Naive thymus-derived CD4-positive, alpha-beta T cell (primary cell): ENCODE measurements at regions of chr12 and their contacts with region 1.

Region 1: DNA sequence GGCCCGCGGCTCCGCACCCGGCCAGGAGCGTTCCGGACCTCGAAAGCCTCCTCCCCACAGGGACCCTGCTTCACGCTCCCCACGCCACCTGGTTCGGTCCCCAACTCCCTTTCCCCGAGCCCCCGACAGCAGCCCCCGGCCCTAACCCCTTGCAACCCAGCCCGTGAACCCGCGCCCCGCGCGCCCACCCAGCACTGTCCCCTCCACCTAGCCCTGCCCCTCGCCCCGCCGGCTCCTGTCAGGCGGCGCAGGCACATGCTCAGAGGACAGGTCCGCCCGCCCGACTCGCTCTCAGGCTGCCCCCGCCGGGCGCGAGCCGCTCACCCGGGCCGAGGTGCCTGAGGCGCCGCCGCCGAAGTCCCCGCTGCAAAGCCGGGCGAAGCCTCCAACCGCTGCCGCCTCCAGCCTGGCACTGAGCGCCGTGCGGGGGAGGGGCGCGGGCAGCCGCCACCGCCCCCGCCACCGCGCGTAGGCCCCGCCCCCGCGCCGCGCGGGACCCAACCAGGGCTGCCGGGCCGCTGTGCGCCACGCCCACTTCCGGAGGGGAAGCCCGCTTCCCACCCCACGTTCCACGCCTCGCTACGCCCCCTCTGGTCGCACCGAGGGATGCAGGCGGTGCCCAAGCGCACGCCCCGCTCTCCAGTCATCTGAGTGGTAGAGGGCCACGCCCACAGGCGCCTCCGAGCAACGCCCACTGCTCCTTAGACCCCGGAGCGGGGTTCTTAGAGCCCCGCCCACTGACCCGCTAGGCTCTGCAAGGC is at the start of gene CORO1C:
- DNase-seq: peak; percentile 90 to 99 (median 94)
- ATAC-seq: peak; percentile 88
- H3K4me3 ChIP-seq: peak within 1 kb of the TSS; percentile 99
- H3K4me3 Mint-ChIP-seq: peak within 1 kb of the TSS; percentile 94 to 99 (median 96)
- H3K27ac ChIP-seq: peak within 1 kb of the TSS; percentile 78
- H3K27ac Mint-ChIP-seq: peak within 1 kb of the TSS; percentile 79 to 98 (median 96)
- H3K4me1 ChIP-seq: peaks cover 4 to 6% of the 10 kb centered on the region in 2 donors
- H3K4me1 Mint-ChIP-seq: peaks cover 0 to 44% (median 19%) of the 10 kb centered on the region in 7 donors
- H3K27me3 ChIP-seq: no peaks in the 10 kb centered on the region
- H3K27me3 Mint-ChIP-seq: peaks cover 0 to 9% (median 0%) of the 10 kb centered on the region in 5 donors
- total RNA-seq, gene CORO1C: 7.6 to 71.8 (median 15.7) TPM

Region 2: DNA sequence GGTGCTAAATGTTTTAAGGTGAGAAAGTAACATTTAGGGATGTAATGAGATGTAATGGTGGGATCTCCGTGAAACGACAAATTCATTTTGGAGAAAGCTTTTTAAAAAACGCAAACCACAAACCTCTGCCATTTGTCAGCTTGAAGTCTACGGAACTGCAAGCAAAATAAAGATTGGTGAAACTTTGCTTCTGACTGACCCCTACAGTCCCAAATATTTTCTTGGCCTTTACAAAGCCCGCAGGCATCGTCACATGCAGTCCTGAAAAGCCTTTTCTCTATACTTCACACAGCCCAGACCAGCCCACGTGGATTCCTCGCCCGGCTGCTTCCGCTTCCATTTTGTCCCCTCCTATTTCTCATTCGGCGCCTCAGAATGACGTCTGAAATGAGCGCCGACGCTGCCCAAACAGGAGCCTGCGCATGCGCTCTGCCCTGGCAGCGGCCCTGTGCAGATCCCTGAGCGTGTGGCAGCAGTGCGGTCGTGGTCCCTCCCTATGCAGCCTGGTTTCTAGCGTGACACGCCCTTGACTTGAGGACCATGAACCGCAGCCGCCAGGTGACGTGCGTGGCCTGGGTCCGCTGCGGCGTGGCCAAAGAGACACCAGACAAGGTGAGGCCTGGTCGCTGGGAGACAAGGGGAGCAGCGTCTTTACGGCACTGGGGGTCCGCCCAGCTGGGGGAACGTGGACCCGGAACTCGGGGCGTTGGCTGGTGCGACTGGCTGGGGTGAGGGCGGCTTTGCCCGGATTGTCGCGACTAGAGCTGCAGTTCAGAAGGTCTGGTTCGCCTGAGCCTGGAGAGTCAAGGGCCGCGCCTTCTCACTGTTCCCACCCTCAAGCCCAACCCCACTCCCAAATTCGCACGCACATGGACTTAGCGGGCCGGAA is 1045.7 kb before region 1 on chr12 and contains the start of gene PWP1:
- CTCF ChIA-PET with region 1: no interaction called
- POLR2A ChIA-PET with region 1: no interaction called
- intact Hi-C with region 1: loop called in 1 of 2 experiments (anchors 1 kb)
- DNase-seq: peak; percentile 93 to 97 (median 95)
- ATAC-seq: peak; percentile 93
- H3K4me3 ChIP-seq: peak within 1 kb of the TSS; percentile 78
- H3K4me3 Mint-ChIP-seq: peak within 1 kb of the TSS; percentile 90 to 99 (median 95)
- H3K27ac ChIP-seq: peak within 1 kb of the TSS; percentile 88
- H3K27ac Mint-ChIP-seq: peak within 1 kb of the TSS; percentile 90 to 99 (median 97)
- H3K4me1 ChIP-seq: peaks cover 12 to 19% of the 10 kb centered on the region in 2 donors
- H3K4me1 Mint-ChIP-seq: peaks cover 23 to 40% (median 35%) of the 10 kb centered on the region in 7 donors
- H3K27me3 ChIP-seq: no peaks in the 10 kb centered on the region
- H3K27me3 Mint-ChIP-seq: peaks cover 0 to 3% (median 0%) of the 10 kb centered on the region in 5 donors
- total RNA-seq, gene PWP1: 20.9 to 42.5 (median 25.7) TPM

Region 3: GRCh38 chr12:108664338-108665258 is 66.7 kb before region 1 on chr12:
- CTCF ChIA-PET with region 1: interaction called, 10 read pairs
- POLR2A ChIA-PET with region 1: no interaction called
- intact Hi-C with region 1: loop called (anchors 1 kb)
- DNase-seq: peak; percentile 35 to 83 (median 78)
- ATAC-seq: peak; percentile 97
- H3K4me3 ChIP-seq: no peak overlapping the region
- H3K4me3 Mint-ChIP-seq: peak overlapping the region in 1 of 10 donors; percentile 24
- H3K27ac ChIP-seq: no peak overlapping the region
- H3K27ac Mint-ChIP-seq: peak overlapping the region in 8 of 9 donors; percentile 8 to 84 (median 75)
- H3K4me1 ChIP-seq: peaks cover 0 to 3% of the 10 kb centered on the region in 2 donors
- H3K4me1 Mint-ChIP-seq: peaks cover 5 to 17% (median 12%) of the 10 kb centered on the region in 7 donors
- H3K27me3 ChIP-seq: no peaks in the 10 kb centered on the region
- H3K27me3 Mint-ChIP-seq: no peaks in the 10 kb centered on the region

Region 4: GRCh38 chr12:108803428-108804105 is 72.3 kb after region 1 on chr12:
- CTCF ChIA-PET with region 1: interaction called, 3 read pairs
- POLR2A ChIA-PET with region 1: interaction called, 3 read pairs
- intact Hi-C with region 1: loop called (anchors 1 to 5 kb)
- DNase-seq: peak; percentile 25 to 78 (median 70)
- ATAC-seq: peak; percentile 93
- H3K4me3 ChIP-seq: no peak overlapping the region
- H3K4me3 Mint-ChIP-seq: no peak overlapping the region
- H3K27ac ChIP-seq: no peak overlapping the region
- H3K27ac Mint-ChIP-seq: peak overlapping the region in 3 of 9 donors; percentile 37 to 62 (median 48)
- H3K4me1 ChIP-seq: peaks cover 0 to 3% of the 10 kb centered on the region in 2 donors
- H3K4me1 Mint-ChIP-seq: peaks cover 0 to 10% (median 3%) of the 10 kb centered on the region in 7 donors
- H3K27me3 ChIP-seq: no peaks in the 10 kb centered on the region
- H3K27me3 Mint-ChIP-seq: no peaks in the 10 kb centered on the region

Region 5: DNA sequence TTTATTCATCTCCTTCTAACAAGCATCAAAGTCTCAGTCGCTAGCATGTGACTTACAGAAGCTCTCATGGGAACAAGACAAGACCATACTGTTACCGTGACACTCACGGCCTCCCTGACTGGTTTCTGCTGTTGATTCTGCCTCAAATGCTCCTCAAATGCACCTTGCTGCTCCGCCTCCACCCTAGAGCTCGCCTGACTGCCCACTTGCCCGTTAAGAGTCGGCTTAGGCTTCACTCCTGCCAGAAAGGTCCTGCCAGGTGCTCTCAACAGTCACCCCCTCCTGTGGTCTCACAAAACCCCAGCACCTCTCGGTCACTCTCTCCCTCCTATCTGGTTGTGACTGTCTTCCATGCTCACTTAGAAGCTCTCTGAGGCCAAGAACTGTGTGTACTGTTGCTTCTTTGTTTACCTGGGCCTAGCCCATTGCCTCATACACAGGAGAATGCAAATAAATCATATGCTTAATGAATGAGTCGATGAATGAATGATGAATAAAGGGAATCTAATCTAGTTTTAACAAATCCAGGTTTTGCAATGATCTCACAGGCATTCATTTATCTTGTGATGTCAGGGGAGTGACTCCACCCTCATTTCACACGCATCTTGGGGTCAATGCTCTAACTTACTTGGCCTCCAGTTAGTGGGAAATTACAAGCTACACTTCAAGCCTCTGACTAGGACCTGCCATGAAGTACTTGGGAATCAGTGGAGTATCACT is 84.8 kb after region 1 on chr12:
- CTCF ChIA-PET with region 1: no interaction called
- POLR2A ChIA-PET with region 1: no interaction called
- intact Hi-C with region 1: no loop called
- DNase-seq: no peak
- ATAC-seq: no peak
- H3K4me3 ChIP-seq: no peak overlapping the region
- H3K4me3 Mint-ChIP-seq: no peak overlapping the region
- H3K27ac ChIP-seq: no peak overlapping the region
- H3K27ac Mint-ChIP-seq: peak overlapping the region in 1 of 9 donors; percentile 44
- H3K4me1 ChIP-seq: no peaks in the 10 kb centered on the region
- H3K4me1 Mint-ChIP-seq: peaks cover 0 to 8% (median 0%) of the 10 kb centered on the region in 7 donors
- H3K27me3 ChIP-seq: no peaks in the 10 kb centered on the region
- H3K27me3 Mint-ChIP-seq: no peaks in the 10 kb centered on the region

Region 6: GRCh38 chr12:109004017-109004416 is 272.7 kb after region 1 on chr12:
- CTCF ChIA-PET with region 1: no interaction called
- POLR2A ChIA-PET with region 1: no interaction called
- intact Hi-C with region 1: no loop called
- DNase-seq: no peak
- ATAC-seq: no peak
- H3K4me3 ChIP-seq: no peak overlapping the region
- H3K4me3 Mint-ChIP-seq: no peak overlapping the region
- H3K27ac ChIP-seq: no peak overlapping the region
- H3K27ac Mint-ChIP-seq: no peak overlapping the region
- H3K4me1 ChIP-seq: no peaks in the 10 kb centered on the region
- H3K4me1 Mint-ChIP-seq: no peaks in the 10 kb centered on the region
- H3K27me3 ChIP-seq: no peaks in the 10 kb centered on the region
- H3K27me3 Mint-ChIP-seq: peaks cover 7 to 21% (median 14%) of the 10 kb centered on the region in 5 donors

Region 7: DNA sequence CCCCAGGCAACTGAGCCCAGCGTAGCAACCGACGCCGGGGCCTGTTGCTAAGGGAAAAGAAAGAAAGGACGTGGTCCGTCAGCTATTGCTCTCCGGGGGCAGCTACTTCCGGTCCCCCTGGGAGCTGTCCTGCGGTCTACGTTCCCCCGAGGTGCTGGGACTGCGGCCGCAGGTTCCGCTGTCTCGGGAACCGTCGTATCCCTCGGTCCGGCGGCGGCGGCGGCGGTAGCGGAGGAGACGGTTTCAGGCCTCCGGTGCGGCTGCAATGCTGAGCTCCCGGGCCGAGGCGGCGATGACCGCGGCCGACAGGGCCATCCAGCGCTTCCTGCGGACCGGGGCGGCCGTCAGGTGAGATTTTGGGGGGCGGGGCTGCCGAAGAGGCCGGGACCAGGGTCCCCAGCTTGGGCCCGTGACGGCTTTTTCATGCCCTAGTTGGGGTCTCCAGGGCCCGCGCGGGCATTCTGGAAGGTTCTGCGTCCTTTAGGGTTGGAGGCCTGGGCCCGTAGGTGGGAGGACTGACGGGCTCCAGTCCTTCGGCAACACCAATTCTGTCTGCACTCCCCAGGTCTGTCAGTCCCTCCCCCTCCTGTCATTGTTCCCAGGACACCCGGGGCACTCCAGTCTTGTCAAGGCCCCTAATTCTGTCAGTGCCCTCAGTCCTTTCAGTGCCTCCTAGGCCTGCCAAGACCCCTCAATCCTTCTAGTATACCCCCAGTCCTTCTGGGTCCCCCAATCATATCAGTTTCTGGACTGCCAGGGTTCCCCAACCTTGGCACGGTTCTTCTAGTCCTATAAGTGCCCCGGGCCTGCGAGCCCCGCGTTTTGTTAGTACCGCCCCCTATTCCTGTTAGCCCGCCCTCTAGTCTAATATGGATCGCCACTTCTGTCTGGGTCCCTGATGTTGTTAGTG is 321.4 kb after region 1 on chr12 and contains the start of gene USP30:
- CTCF ChIA-PET with region 1: no interaction called
- POLR2A ChIA-PET with region 1: no interaction called
- intact Hi-C with region 1: loop called (anchors 2 to 5 kb)
- DNase-seq: peak; percentile 68 to 86 (median 77)
- ATAC-seq: peak; percentile 93
- H3K4me3 ChIP-seq: peak within 1 kb of the TSS; percentile 91
- H3K4me3 Mint-ChIP-seq: peak within 1 kb of the TSS; percentile 86 to 99 (median 96)
- H3K27ac ChIP-seq: peak within 1 kb of the TSS; percentile 89
- H3K27ac Mint-ChIP-seq: peak within 1 kb of the TSS; percentile 89 to 98 (median 95)
- H3K4me1 ChIP-seq: peaks cover 13% of the 10 kb centered on the region in 2 donors
- H3K4me1 Mint-ChIP-seq: peaks cover 14 to 27% (median 17%) of the 10 kb centered on the region in 7 donors
- H3K27me3 ChIP-seq: no peaks in the 10 kb centered on the region
- H3K27me3 Mint-ChIP-seq: no peaks in the 10 kb centered on the region
- total RNA-seq, gene USP30: 7.8 to 15.7 (median 12.9) TPM

Region 8: DNA sequence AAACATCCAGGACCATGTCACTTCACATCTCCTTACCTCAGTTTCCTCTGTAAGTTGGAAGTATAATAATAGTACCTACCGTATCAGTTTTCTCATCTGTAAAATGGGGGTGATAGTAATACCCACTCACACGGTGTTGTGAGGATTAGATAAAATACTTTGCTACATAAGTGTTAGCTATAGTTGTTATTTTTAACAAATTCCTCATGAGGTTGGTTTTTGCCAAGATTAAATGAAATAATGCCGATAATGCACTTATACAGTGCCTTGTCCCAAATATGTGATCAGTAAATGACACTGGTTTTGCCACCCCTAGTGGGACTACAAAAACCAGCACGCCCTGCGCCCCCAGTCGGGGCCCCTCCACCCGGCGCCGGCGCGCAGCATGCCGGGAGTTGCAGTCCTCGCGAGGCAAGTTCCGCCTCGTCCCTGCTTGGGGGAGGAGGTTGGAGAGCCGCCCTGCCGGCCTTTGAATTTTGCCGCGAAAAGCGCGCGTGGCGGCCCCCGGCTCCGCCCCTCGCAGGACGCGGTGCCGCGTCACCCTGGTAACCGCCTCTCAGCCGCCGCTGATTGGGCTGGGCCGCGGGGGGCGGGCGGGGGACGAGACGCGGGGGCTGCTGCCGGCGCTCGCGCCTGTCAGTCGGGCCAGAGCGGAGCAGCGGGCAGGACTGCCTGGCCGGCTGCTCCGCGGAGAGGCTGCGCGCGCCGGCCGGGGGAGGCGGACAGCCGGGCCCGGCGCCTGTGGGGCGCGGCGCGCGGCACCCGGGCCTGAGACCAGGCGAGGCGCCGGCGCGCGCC is 982.1 kb after region 1 on chr12 and contains the start of gene FAM222A:
- CTCF ChIA-PET with region 1: no interaction called
- POLR2A ChIA-PET with region 1: no interaction called
- intact Hi-C with region 1: loop called in 1 of 2 experiments (anchors 5 kb)
- DNase-seq: peak; percentile 94 to 99 (median 98)
- ATAC-seq: peak; percentile 94
- H3K4me3 ChIP-seq: peak within 1 kb of the TSS; percentile 41
- H3K4me3 Mint-ChIP-seq: peak within 1 kb of the TSS; percentile 57 to 81 (median 72)
- H3K27ac ChIP-seq: peak within 1 kb of the TSS; percentile 55
- H3K27ac Mint-ChIP-seq: peak within 1 kb of the TSS in 1 of 9 donors; percentile 48
- H3K4me1 ChIP-seq: peaks cover 3 to 11% of the 10 kb centered on the region in 2 donors
- H3K4me1 Mint-ChIP-seq: peaks cover 0 to 4% (median 0%) of the 10 kb centered on the region in 7 donors
- H3K27me3 ChIP-seq: peaks cover 0 to 6% of the 10 kb centered on the region in 2 donors
- H3K27me3 Mint-ChIP-seq: peaks cover 29 to 65% (median 30%) of the 10 kb centered on the region in 5 donors
- total RNA-seq, gene FAM222A: 0.24 to 1.6 (median 0.80) TPM